A673 (cell line): ENCODE measurements at regions of chr3 and their contacts with region 1.

Region 1: DNA sequence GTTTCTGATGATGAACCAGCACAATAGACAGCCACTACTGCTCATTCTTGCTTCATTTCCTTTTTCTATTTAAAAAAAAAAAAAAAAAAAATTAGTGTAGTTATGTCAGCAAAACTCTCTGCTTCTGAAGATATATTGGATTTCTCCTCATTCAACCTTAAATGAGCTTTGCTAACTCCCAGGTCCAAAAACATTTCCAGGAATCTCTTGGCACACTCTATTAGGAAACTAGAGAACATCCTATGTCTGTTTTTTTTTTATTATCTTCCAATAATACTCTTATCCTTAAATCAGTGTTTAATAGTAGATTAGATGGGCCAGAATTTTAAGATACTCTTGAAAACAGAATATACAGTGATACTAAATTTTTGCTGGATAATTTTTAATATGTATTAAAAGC is 398.0 kb downstream of the NAALADL2 start:
- DNase-seq: no peak
- H3K4me3 ChIP-seq: no peak overlapping the region
- H3K27ac ChIP-seq: no peak overlapping the region
- H3K4me1 ChIP-seq: no peaks in the 10 kb centered on the region
- H3K27me3 ChIP-seq: no peaks in the 10 kb centered on the region
- CTCF ChIP-seq: no peak

Region 2: GRCh38 chr3:175270198-175270837 is 13.2 kb after region 1 on chr3:
- CTCF ChIA-PET with region 1: no interaction called
- POLR2A ChIA-PET with region 1: interaction called, 19 read pairs
- intact Hi-C with region 1: no loop called
- DNase-seq: peak; percentile 53
- H3K4me3 ChIP-seq: no peak overlapping the region
- H3K27ac ChIP-seq: peak overlapping the region; percentile 1
- H3K4me1 ChIP-seq: peaks cover 13% of the 10 kb centered on the region
- H3K27me3 ChIP-seq: no peaks in the 10 kb centered on the region
- CTCF ChIP-seq: no peak

Region 3: GRCh38 chr3:175585898-175586297 is 328.8 kb after region 1 on chr3:
- CTCF ChIA-PET with region 1: no interaction called
- POLR2A ChIA-PET with region 1: no interaction called
- intact Hi-C with region 1: no loop called
- DNase-seq: peak; percentile 30
- H3K4me3 ChIP-seq: no peak overlapping the region
- H3K27ac ChIP-seq: no peak overlapping the region
- H3K4me1 ChIP-seq: no peaks in the 10 kb centered on the region
- H3K27me3 ChIP-seq: no peaks in the 10 kb centered on the region
- CTCF ChIP-seq: no peak